ENCODE measurements at regions of chr17 and their contacts with region 1.

Region 1: DNA sequence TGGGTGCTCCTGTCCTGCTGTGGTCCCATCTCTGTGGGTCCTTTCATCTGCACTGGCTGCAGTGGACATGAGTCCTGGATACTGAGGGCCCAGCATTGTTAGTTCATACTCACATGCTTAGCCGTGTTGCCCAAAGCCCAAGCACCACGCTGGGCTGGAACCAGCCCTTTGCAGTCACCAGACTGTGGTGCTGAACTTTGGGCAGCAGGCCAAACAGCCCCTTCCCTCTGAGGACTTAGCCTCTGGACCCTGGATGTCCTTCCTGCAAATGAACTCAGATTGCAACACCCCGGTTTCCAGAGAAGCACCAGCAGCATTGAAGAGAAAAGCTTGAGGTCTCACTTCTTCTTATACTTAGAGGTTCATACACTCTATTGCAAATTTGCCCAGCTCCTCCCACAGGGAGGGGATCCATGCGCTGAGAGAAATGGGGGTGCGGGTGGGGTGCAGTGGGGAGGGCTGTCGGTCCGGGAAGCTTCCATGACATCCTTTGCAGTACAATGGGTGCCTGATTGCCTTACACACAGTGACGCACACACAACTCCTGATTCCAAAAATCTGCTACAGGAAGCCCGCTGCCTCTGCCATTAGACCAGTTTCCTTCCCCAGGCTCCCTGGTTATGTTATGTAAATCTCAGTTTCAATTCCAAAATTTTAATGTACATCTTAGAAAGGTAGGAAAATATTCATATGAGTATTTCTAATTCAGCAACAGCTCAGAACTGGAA is 65.8 kb downstream of the RGS9 start:
- DNase-seq: peak; percentile 52

Region 2: DNA sequence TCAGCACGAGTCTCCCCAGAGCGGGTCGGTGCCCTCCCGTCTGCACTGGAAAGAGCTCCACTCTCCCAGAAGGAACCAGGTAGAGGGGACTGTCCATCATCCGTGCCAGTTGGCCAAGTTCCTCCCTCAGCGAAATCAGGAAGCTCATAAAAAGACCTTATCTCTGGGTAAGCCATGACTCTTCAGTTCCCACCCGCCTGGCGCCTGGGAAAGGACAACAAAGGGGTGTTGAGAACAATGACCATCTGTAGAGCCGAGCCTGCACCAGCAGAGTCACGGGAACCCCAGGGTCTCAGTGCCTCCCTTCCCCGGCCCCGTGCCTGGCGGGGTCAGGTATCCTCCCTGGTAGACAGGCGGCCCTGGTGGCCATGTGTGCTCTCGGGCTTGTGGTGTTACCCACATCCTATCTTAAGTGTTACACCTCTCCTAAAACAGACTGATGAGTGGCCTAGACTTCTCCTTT is 167.7 kb after region 1 on chr17:
- in situ Hi-C with region 1: loop called (anchors 10 kb)
- DNase-seq: no peak